T-cell (primary cell): ENCODE measurements at regions of chr2 and their contacts with region 1.

Region 1: DNA sequence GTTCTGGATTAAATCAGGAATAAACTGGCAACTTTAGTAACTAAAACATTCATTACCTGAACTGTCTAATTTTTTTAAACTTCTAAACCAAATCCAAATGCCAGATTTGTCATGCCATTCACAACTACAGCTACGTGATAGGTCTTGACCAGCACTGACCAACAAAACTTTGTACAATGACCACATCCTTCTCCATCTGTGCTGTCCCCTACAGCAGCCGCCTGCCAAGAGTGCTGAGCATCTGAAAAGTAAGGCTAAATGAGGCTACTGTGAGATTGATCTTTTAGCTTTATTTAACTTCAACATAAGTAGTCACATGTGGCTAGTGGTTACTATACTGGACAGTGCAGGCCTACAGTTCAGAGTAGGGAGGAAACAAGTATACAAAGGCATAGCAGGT is 7.6 kb downstream of the FAM168B start:
- DNase-seq: no peak
- ATAC-seq: no peak
- H3K4me3 ChIP-seq: no peak overlapping the region
- H3K4me3 Mint-ChIP-seq: no peak overlapping the region
- H3K27ac ChIP-seq: no peak overlapping the region
- H3K27ac Mint-ChIP-seq: no peak overlapping the region
- H3K4me1 ChIP-seq: peaks cover 0 to 3% of the 10 kb centered on the region in 2 experiments
- H3K4me1 Mint-ChIP-seq: peaks cover 58 to 68% (median 64%) of the 10 kb centered on the region in 3 donors
- H3K27me3 ChIP-seq: no peaks in the 10 kb centered on the region
- H3K27me3 Mint-ChIP-seq: no peaks in the 10 kb centered on the region

Region 2: DNA sequence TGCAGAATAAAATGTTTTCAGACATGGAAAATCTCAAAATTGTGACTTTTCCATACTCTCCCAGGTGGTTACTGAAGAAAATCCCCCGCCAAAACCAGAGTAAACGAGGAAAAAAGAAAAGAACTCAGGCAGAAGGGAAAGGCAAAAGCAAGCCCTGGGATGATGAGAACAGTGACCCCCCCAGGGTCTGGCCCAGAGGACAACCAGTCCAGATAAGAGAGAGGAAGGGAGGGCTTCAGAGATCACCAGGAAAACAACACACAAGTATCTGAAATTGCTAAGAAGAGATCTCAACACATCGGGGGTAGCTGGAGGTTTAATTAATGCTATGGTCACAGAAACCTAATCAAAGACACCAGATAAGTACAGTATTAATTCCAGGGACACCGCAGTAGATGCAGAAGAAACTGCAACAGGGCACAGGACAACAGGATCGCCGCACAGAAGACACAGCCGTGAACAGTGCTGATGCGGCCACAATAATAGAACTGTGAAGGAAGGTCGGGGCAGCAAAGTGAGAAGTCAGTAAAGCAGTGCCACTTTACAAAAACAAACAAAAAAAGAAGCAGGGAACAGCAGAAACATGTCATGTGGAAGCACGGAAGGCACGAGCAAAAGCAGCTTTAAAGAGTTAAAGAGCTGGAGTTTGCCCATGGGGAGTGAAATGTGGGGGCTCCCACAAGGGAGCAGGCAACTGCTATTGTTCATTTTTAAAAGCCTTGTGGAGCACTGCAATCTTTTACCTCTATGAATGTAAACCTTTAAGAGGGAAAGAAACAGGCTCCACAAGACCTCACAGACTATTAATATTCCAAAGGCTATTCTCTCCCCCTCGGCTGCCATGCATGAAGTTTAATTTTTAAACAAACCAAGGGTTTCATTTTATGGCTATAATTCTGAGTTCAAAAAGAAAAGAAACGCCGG is 20.8 kb before region 1 on chr2:
- CTCF ChIA-PET with region 1: no interaction called
- POLR2A ChIA-PET with region 1: interaction called in 1 of 2 experiments, 10 read pairs
- DNase-seq: no peak
- ATAC-seq: no peak
- H3K4me3 ChIP-seq: no peak overlapping the region
- H3K4me3 Mint-ChIP-seq: no peak overlapping the region
- H3K27ac ChIP-seq: no peak overlapping the region
- H3K27ac Mint-ChIP-seq: no peak overlapping the region
- H3K4me1 ChIP-seq: peaks cover 0 to 5% of the 10 kb centered on the region in 2 experiments
- H3K4me1 Mint-ChIP-seq: peaks cover 48 to 52% (median 48%) of the 10 kb centered on the region in 3 donors
- H3K27me3 ChIP-seq: no peaks in the 10 kb centered on the region
- H3K27me3 Mint-ChIP-seq: no peaks in the 10 kb centered on the region

Region 3: DNA sequence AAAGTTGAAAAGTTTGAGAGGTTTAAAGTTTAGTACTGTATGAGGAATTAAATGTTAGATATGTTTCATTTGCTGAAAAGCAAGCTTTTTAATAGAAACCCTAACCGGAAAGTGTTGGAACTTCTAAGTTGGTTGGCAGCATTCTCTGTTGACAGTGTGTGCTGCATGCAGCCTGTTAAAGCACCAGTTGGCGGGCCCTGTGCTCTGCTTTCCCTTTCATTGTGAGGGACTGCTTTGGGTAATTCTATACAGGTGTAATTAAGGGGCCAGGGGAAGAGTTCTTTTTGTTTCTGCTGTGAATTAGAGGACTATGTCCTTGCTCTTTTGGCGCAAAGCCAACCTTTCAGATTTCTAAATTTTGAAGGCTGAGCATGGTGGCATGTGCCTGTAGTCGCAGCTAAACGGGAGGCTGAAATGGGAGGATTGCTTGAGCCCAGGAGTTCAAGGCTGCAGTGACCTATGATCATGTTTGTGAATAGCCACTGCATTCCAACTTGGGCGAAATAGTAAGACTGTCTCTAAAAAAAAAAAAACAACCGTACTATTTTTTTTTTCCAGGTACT is 39.6 kb after region 1 on chr2:
- CTCF ChIA-PET with region 1: no interaction called
- POLR2A ChIA-PET with region 1: no interaction called
- DNase-seq: no peak
- ATAC-seq: no peak
- H3K4me3 ChIP-seq: no peak overlapping the region
- H3K4me3 Mint-ChIP-seq: no peak overlapping the region
- H3K27ac ChIP-seq: no peak overlapping the region
- H3K27ac Mint-ChIP-seq: no peak overlapping the region
- H3K4me1 ChIP-seq: peaks cover 0 to 4% of the 10 kb centered on the region in 2 experiments
- H3K4me1 Mint-ChIP-seq: peaks cover 9 to 12% (median 10%) of the 10 kb centered on the region in 3 donors
- H3K27me3 ChIP-seq: no peaks in the 10 kb centered on the region
- H3K27me3 Mint-ChIP-seq: no peaks in the 10 kb centered on the region

Region 4: GRCh38 chr2:131156423-131157147 is 70.9 kb after region 1 on chr2:
- CTCF ChIA-PET with region 1: no interaction called
- POLR2A ChIA-PET with region 1: no interaction called
- DNase-seq: no peak
- ATAC-seq: no peak
- H3K4me3 ChIP-seq: no peak overlapping the region
- H3K4me3 Mint-ChIP-seq: peak overlapping the region in 2 of 3 donors; percentile 34 to 56
- H3K27ac ChIP-seq: no peak overlapping the region
- H3K27ac Mint-ChIP-seq: peak overlapping the region in 1 of 2 donors; percentile 66
- H3K4me1 ChIP-seq: peaks cover 0 to 22% of the 10 kb centered on the region in 2 experiments
- H3K4me1 Mint-ChIP-seq: peaks cover 0 to 28% (median 17%) of the 10 kb centered on the region in 3 donors
- H3K27me3 ChIP-seq: peaks cover 0 to 4% of the 10 kb centered on the region in 2 experiments
- H3K27me3 Mint-ChIP-seq: no peaks in the 10 kb centered on the region